Activated CD4-positive, alpha-beta T cell treated with anti-CD3 and anti-CD28 coated beads, Interleukin-2, amount 10 ng/mL, durations not matched to agents 24 days and 14 days (primary cell): ENCODE measurements at regions of chr2 and their contacts with region 1.

Region 1: GRCh38 chr2:27071277-27071989 is at the start of gene OST4:
- DNase-seq: peak; percentile 98
- H3K4me3 Mint-ChIP-seq: peak within 1 kb of the TSS; percentile 99
- H3K27ac Mint-ChIP-seq: peak within 1 kb of the TSS; percentile 93
- H3K4me1 Mint-ChIP-seq: peaks cover 58% of the 10 kb centered on the region
- H3K27me3 Mint-ChIP-seq: no peaks in the 10 kb centered on the region
- total RNA-seq, gene OST4: 314 and 326 TPM in 2 replicates

Region 2: GRCh38 chr2:27050281-27050995 is 21.0 kb before region 1 on chr2:
- intact Hi-C with region 1: loop called (anchors 1 kb)
- DNase-seq: peak; percentile 98
- H3K4me3 Mint-ChIP-seq: peak overlapping the region; percentile 90
- H3K27ac Mint-ChIP-seq: peak overlapping the region; percentile 99
- H3K4me1 Mint-ChIP-seq: peaks cover 22% of the 10 kb centered on the region
- H3K27me3 Mint-ChIP-seq: peaks cover 5% of the 10 kb centered on the region